ENCODE measurements at regions of chr1 and their contacts with region 1.

Region 1: DNA sequence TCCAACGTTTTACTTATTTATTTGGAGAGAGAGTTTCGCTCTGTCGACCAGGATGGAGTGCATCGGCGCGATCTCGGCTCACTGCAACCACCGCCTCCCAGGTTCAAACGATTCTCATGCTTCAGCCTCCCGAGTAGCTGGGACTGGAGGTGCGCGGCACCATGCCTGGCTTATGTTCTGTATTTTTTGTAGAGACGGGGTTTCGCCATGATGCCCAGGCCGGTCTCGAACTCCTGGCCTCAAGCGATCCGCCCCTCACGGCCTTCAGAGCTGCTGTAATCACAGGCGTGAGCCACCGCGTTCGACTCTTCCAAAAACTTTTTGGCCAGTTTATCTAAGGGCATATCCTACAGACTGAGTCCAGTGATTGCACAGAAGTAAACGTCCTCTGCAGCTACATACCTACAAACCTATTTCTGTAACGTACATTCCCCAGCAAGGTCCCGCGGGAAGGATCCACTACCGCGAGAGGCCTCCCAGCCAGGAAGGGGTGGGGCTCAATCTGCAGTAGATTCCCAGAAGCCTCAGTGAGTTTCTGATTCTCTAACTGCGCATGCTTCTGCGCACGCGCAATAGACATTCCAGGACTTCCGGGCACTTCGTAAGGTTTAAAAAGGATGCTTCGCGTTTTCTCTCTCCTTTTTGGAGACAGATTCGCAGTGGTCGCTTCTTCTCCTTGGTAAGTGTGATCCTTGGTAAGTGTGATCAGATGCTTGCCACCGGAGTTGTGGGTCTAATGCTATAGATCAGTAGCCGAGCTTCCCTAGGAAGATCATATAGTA is at the start of gene RCC1:
- DNase-seq: peak; percentile 98
- ATAC-seq: peak; percentile 94
- H3K4me3 ChIP-seq: peak within 1 kb of the TSS; percentile 60 to 84 (median 80)
- H3K4me3 Mint-ChIP-seq: peak within 1 kb of the TSS; percentile 97
- H3K27ac ChIP-seq: peak within 1 kb of the TSS; percentile 65 to 67
- H3K27ac Mint-ChIP-seq: peak within 1 kb of the TSS; percentile 98
- H3K4me1 ChIP-seq: peaks cover 38 to 48% of the 10 kb centered on the region in 2 donors
- H3K4me1 Mint-ChIP-seq: peaks cover 42% of the 10 kb centered on the region
- H3K27me3 ChIP-seq: no peaks in the 10 kb centered on the region
- H3K27me3 Mint-ChIP-seq: no peaks in the 10 kb centered on the region
- CTCF ChIP-seq: no peak
- total RNA-seq, gene RCC1: 16.3 and 17.5 TPM in 2 replicates

Region 2: GRCh38 chr1:28329395-28330153 is 176.0 kb before region 1 on chr1:
- CTCF ChIA-PET with region 1: no interaction called
- POLR2A ChIA-PET with region 1: interaction called, 7 read pairs
- intact Hi-C with region 1: loop called (anchors 1 kb)
- DNase-seq: peak; percentile 67
- ATAC-seq: no peak
- H3K4me3 ChIP-seq: peak overlapping the region; percentile 72 to 93 (median 80)
- H3K4me3 Mint-ChIP-seq: peak overlapping the region; percentile 91
- H3K27ac ChIP-seq: peak overlapping the region; percentile 91 to 99
- H3K27ac Mint-ChIP-seq: peak overlapping the region; percentile 99
- H3K4me1 ChIP-seq: peaks cover 34 to 41% of the 10 kb centered on the region in 2 donors
- H3K4me1 Mint-ChIP-seq: peaks cover 45% of the 10 kb centered on the region
- H3K27me3 ChIP-seq: no peaks in the 10 kb centered on the region
- H3K27me3 Mint-ChIP-seq: no peaks in the 10 kb centered on the region
- CTCF ChIP-seq: no peak

Region 3: DNA sequence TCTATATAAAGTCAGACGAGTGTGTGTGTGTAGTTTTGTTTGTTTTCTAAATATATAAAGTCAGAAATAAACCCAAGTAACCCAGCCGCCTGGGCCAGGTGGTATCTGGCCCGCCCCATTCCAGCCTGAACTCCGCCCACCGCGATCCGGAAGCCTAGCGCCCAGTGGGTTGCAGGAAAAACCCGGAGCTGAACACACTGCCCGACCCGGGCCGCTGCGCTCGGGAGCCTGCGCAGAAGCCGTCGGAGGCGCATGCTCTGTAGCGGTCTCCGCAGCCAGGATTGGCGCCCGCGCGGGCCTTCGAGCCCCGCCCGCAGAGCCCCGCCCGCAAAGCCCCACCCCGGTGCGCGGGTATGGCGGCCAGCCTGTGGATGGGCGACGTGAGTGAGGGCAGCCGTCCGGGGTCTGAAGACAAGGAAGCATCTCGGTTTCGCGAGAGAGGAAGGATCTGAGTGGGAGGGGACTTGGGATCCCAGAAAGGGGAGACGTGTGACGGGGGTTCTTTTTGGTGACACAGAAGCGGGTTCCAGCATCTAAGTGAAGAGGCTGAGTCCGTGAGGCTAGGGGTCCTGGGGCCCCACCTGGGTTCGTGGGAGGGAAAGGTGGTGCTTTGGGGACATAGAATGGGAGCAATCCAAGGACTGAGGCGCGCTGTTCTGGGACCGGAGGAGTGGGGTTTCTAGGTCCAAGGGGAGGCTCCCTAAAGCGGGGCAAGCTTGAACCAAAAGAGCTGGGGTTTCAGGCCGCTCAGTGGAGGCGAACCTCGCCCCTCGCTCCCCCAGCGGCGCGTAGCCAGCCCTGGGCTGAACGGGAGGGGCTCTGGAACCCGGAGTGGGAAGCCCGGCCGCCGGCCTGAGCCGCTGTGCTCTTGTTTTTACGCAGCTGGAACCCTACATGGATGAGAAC is 47.4 kb after region 1 on chr1 and contains the start of gene TRNAU1AP:
- CTCF ChIA-PET with region 1: no interaction called
- POLR2A ChIA-PET with region 1: interaction called, 7 read pairs
- intact Hi-C with region 1: loop called (anchors 1 kb)
- DNase-seq: peak; percentile 98
- ATAC-seq: peak; percentile 94
- H3K4me3 ChIP-seq: peak within 1 kb of the TSS; percentile 77 to 97 (median 90)
- H3K4me3 Mint-ChIP-seq: peak within 1 kb of the TSS; percentile 100
- H3K27ac ChIP-seq: peak within 1 kb of the TSS; percentile 82 to 86
- H3K27ac Mint-ChIP-seq: peak within 1 kb of the TSS; percentile 99
- H3K4me1 ChIP-seq: peaks cover 5 to 17% of the 10 kb centered on the region in 2 donors
- H3K4me1 Mint-ChIP-seq: peaks cover 18% of the 10 kb centered on the region
- H3K27me3 ChIP-seq: no peaks in the 10 kb centered on the region
- H3K27me3 Mint-ChIP-seq: no peaks in the 10 kb centered on the region
- CTCF ChIP-seq: no peak
- total RNA-seq, gene TRNAU1AP: 45.2 and 48.5 TPM in 2 replicates

Region 4: DNA sequence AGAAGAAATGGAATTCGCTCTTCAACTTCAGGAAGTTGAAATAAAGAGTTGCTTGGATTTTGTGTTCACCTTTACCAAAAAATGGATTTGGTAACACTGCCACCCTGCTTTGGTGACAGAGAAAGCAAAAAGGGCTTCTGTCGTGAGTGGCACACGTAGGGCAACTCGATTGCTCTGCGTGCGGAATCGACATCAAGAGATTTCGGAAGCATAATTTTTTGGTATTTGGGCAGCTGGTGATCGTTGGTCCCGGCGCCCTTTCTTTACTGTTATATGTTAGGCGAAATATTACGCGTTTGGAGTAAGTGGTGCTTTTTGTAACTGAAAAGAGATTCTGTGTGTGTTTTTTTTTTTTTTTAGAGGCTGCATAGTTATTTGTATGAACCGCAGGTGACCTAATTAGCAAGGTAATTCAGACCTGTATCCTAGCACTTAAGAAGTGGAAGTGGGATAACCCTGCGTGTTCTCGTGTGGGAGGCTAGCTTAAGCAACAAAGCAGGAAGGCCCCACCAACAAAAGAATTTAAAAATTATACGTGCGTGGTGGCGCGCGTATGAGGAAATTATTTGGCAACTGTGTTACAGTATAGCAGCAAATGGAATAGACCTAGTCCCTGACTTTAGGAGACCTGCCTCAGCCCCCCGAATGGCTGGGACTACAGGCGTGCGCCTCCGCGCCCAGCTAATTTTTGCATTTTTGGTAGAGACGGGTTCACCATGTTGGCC is 143.0 kb after region 1 on chr1 and contains the start of gene RNU11:
- CTCF ChIA-PET with region 1: no interaction called
- POLR2A ChIA-PET with region 1: no interaction called
- intact Hi-C with region 1: loop called (anchors 1 kb)
- DNase-seq: peak; percentile 98
- ATAC-seq: peak; percentile 72
- H3K4me3 ChIP-seq: peak within 1 kb of the TSS; percentile 9 to 60 (median 53)
- H3K4me3 Mint-ChIP-seq: peak within 1 kb of the TSS; percentile 94
- H3K27ac ChIP-seq: peak within 1 kb of the TSS; percentile 93 to 100
- H3K27ac Mint-ChIP-seq: peak within 1 kb of the TSS; percentile 100
- H3K4me1 ChIP-seq: peaks cover 25 to 33% of the 10 kb centered on the region in 2 donors
- H3K4me1 Mint-ChIP-seq: peaks cover 32% of the 10 kb centered on the region
- H3K27me3 ChIP-seq: no peaks in the 10 kb centered on the region
- H3K27me3 Mint-ChIP-seq: no peaks in the 10 kb centered on the region
- CTCF ChIP-seq: no peak
- total RNA-seq, gene RNU11: not detected in 2 replicates